ENCODE measurements at regions of chr3 and their contacts with region 1.

Region 1: DNA sequence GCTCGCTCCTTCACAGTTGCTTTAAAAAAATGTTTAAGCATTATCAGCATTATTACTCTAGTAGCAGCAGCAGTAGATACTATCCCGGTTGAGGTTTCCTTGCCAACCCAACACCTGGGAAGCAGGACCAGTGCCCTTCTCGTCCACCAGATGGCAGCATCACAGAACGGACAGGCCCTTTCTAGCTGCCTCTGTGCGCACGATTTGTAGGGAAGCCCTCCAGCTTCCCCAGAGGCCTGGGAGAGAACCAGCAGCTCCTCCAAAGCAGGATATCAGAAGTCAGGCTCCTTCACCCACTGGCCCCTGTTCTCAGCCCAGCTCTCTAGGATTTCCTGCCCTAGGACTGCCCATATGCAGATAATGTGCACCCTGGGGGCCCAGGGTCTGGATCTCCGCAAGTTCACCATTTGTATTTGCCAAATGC is 16.8 kb upstream of the ESYT3 start:
- DNase-seq: peak; percentile 82 to 94
- H3K4me3 ChIP-seq: no peak overlapping the region
- H3K27ac ChIP-seq: no peak overlapping the region
- H3K4me1 ChIP-seq: peaks cover 0 to 4% (median 2%) of the 10 kb centered on the region in 4 donors
- H3K27me3 ChIP-seq: peaks cover 0 to 13% (median 0%) of the 10 kb centered on the region in 3 donors
- CTCF ChIP-seq: peak in 5 of 7 experiments; percentile 74 to 93 (median 85)
- EP300 ChIP-seq: no peak
- POLR2A ChIP-seq: no peak

Region 2: GRCh38 chr3:138923531-138923994 is 506.0 kb after region 1 on chr3:
- intact Hi-C with region 1: loop called (anchors 10 kb)
- DNase-seq: peak; percentile 91 to 93
- H3K4me3 ChIP-seq: no peak overlapping the region
- H3K27ac ChIP-seq: no peak overlapping the region
- H3K4me1 ChIP-seq: peaks cover 0 to 4% (median 1%) of the 10 kb centered on the region in 4 donors
- H3K27me3 ChIP-seq: peaks cover 0 to 5% (median 0%) of the 10 kb centered on the region in 3 donors
- CTCF ChIP-seq: peak in 6 of 7 experiments; percentile 12 to 91 (median 86)
- EP300 ChIP-seq: no peak
- POLR2A ChIP-seq: no peak